Activated CD8-positive, alpha-beta T cell treated with anti-CD3 and anti-CD28 coated beads, Interleukin-2, amount 10 ng/mL, durations not matched to agents 7 days and 5 days (primary cell): ENCODE measurements at regions of chr1 and their contacts with region 1.

Region 1: DNA sequence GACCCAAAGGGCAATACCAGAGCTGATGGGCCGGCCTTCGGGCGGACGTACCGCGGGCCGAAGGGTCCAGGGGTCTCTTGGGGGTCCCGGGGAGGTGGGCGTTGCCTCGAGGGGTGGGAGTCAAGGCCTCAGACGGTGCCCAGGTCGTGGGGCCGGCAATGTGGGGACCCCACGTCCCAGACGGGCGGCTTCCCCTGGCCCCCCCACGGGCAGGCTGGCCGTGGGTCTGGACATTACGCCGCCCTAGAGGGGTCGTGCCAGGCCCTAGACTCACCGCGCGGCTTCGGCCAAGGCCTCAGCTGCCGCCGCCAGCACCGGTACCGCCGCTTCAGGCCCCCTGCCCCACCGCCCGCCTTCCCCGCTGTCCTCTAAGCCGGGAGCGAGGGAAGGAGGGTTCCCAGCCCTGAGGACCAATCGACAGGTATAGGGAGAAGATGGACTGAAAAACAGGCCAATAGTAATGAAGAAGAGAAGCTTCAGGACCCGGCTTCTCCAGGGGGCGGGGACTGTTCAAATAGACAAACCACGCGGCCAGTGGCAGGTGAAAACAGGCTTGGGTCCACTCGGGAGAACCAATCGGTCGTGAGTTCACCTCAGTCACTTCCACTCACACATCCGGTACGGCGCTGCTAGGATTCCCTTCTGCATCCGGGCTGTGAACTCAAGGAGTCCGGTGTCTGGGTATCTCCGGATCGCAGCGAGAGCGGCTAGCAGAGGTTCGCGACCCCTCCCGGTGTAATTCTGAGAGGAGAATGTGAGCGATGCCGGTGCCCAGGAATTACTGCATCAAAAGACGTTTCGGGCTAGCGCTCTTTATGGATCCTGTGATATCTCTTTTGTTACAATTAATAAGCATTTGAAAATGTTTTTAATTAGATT is at the start of gene MTOR:
- DNase-seq: peak; percentile 99
- ATAC-seq: peak; percentile 99
- H3K4me3 Mint-ChIP-seq: peak within 1 kb of the TSS; percentile 88
- H3K27ac Mint-ChIP-seq: peak within 1 kb of the TSS; percentile 88
- H3K4me1 Mint-ChIP-seq: peaks cover 15% of the 10 kb centered on the region
- H3K27me3 Mint-ChIP-seq: no peaks in the 10 kb centered on the region
- total RNA-seq, gene MTOR: 55.9 to 57.5 TPM

Region 2: GRCh38 chr1:10980094-10980577 is 282.3 kb before region 1 on chr1:
- CTCF ChIA-PET with region 1: no interaction called
- POLR2A ChIA-PET with region 1: no interaction called
- DNase-seq: no peak
- ATAC-seq: no peak
- H3K4me3 Mint-ChIP-seq: no peak overlapping the region
- H3K27ac Mint-ChIP-seq: no peak overlapping the region
- H3K4me1 Mint-ChIP-seq: no peaks in the 10 kb centered on the region
- H3K27me3 Mint-ChIP-seq: peaks cover 19% of the 10 kb centered on the region

Region 3: DNA sequence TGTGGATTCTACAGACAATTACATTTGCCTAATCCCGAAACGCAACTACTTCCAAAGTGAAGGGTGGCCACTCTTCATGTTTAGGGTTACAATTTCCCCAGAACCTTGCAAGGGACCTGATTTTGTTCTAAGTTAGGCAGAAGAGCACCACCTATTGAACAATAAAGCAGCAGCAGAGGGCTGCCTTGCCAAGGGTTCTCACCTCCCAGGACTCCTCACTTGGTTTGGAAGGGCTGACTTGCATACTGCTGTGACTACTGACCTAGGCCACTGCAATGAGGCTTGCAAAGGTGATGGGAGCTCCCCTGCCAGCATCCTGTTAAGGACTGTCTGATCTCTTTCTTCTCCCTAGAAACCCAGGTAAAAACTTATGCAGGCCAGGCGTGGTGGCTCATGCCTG is 14.3 kb before region 1 on chr1:
- CTCF ChIA-PET with region 1: interaction called, 24 read pairs
- POLR2A ChIA-PET with region 1: interaction called, 6 read pairs
- DNase-seq: no peak
- ATAC-seq: no peak
- H3K4me3 Mint-ChIP-seq: no peak overlapping the region
- H3K27ac Mint-ChIP-seq: peak overlapping the region; percentile 28
- H3K4me1 Mint-ChIP-seq: peaks cover 2% of the 10 kb centered on the region
- H3K27me3 Mint-ChIP-seq: no peaks in the 10 kb centered on the region

Region 4: DNA sequence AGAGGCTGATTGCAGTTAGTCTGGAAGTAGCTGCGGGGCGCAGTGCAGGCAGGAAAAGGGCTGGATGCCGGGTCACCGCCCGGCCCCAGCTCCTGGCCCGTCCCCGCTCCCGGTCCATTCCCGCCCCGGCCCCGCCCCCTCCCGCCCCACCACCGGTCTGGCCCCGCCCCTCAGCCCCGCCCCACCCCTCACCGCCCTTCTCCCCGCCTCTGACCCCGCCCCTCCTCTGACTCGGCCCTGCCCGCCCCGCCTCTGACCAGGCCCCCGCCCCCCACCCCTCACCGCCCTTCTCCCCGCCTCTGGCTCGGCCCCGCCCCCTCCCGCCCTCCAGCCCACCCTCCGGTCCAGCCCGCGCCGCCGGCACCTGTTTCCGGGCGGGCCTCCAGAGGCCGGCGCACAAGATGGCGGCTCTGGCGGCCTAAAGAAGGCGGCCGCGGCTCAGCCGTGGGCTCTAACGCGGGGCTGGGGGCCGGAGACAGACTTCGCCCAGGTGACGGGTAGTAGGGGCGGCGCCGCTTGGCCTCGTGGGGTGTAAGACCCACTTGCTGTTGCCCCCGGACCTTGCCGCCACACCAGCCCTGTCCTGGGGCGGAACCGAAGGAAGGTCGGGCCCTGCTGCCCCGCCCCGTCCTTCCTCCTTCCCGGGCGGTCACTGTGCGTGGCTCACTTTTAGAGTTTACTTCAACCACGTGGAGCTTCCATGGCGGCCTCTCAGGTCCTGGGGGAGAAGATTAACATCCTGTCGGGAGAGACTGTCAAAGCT is 10.6 kb after region 1 on chr1 and contains the start of gene UBIAD1:
- CTCF ChIA-PET with region 1: interaction called, 5 read pairs
- POLR2A ChIA-PET with region 1: interaction called, 26 read pairs
- DNase-seq: peak; percentile 88
- ATAC-seq: peak; percentile 87
- H3K4me3 Mint-ChIP-seq: peak within 1 kb of the TSS; percentile 93
- H3K27ac Mint-ChIP-seq: peak within 1 kb of the TSS; percentile 89
- H3K4me1 Mint-ChIP-seq: peaks cover 30% of the 10 kb centered on the region
- H3K27me3 Mint-ChIP-seq: peaks cover 4% of the 10 kb centered on the region
- total RNA-seq, gene UBIAD1: 30.8 to 33.7 TPM

Region 5: GRCh38 chr1:11281518-11282331 is 19.3 kb after region 1 on chr1:
- CTCF ChIA-PET with region 1: interaction called, 7 read pairs
- POLR2A ChIA-PET with region 1: interaction called, 10 read pairs
- DNase-seq: no peak
- ATAC-seq: no peak
- H3K4me3 Mint-ChIP-seq: peak overlapping the region; percentile 28
- H3K27ac Mint-ChIP-seq: peak overlapping the region; percentile 86
- H3K4me1 Mint-ChIP-seq: peaks cover 85% of the 10 kb centered on the region
- H3K27me3 Mint-ChIP-seq: no peaks in the 10 kb centered on the region